Ascending aorta (tissue), 2 donors: ENCODE measurements at regions of chr9 and their contacts with region 1.

Region 1: GRCh38 chr9:98660541-98660940 is 48.2 kb downstream of the GABBR2 start:
- DNase-seq: no peak
- H3K4me3 ChIP-seq: no peak overlapping the region
- H3K27ac ChIP-seq: no peak overlapping the region
- H3K4me1 ChIP-seq: peaks cover 3 to 10% of the 10 kb centered on the region in 2 donors
- H3K27me3 ChIP-seq: no peaks in the 10 kb centered on the region
- CTCF ChIP-seq: no peak

Region 2: DNA sequence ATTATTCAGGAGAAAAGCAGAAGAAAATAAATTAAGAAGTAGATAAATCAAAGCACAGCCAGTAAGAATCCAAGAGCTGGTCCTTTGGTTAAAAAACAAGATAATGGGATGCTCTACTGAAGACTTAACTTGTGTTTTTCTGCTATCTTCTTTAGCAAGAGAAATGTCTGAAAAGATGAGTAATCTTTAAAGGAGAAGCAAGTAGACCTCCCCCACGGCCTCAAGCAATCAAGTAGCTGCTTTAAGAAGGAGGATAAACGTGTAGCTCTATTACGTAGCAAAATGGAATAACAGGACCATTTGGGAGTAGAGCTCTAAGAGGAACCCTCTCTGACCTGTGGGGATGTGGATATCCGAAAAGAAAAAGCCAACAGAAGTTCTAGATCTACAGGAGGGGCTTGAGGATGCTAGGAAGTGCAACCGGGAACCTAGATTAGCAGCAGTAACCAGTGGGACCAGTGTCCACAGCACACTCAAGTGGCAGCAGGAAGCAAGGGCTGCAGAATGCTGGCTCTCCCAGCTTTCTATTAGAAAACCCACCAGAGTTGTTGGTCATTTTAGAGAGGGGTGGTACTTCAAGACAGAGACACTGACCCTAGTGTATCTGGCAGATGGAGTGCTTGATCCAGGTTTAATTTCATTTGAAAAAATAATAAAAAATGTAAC is 137.2 kb before region 1 on chr9:
- intact Hi-C with region 1: no loop called
- DNase-seq: no peak
- H3K4me3 ChIP-seq: no peak overlapping the region
- H3K27ac ChIP-seq: no peak overlapping the region
- H3K4me1 ChIP-seq: no peaks in the 10 kb centered on the region
- H3K27me3 ChIP-seq: no peaks in the 10 kb centered on the region
- CTCF ChIP-seq: no peak

Region 3: DNA sequence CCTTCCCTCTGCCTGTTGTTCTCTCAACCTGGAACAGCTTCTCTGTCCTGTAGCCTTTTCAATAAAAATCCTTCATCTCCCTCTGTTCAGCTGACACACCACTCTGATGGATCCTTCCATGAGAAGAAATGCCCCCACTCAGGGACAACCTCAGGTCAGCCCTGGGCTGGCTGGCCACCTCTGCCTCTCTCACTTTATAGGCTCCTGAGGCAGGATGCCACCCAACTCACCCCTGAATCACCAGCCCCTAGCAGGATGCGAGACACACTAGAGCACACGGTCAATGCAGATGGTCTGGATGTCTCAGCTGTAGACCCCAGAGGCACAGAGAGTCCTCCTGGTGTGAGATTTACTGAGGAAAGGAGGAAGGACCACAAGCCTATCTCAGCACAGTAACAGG is 45.6 kb before region 1 on chr9:
- intact Hi-C with region 1: no loop called
- DNase-seq: peak in 1 of 2 donors; percentile 18
- H3K4me3 ChIP-seq: no peak overlapping the region
- H3K27ac ChIP-seq: no peak overlapping the region
- H3K4me1 ChIP-seq: no peaks in the 10 kb centered on the region
- H3K27me3 ChIP-seq: no peaks in the 10 kb centered on the region
- CTCF ChIP-seq: no peak

Region 4: DNA sequence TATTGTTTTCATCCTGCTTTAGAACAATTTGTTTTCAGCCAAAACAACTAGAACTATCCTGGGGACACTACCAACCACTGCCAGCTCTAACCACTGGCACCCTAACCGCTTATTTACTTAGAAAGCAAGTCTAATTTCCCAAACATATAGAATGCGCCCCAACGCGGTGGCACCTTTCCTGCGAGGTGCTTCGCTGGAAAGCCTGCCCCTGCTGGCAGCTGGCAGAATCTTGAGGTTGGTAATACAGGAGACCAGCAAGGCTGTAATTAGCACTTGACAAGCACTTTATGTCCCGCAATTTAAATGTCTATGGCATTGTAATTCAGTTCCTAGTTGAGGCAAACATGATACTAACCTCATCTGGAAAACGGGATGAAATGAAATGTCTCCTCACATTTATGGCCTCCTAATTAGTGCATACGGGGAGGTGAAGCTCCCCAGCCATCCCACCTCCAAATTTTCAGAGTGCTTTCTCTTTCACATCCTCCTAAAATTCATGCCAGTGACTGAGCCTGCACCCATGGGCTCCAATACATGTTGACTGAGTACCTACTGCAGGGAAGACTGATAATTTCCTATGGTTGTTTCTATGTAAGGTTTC is 17.8 kb after region 1 on chr9:
- intact Hi-C with region 1: no loop called
- DNase-seq: no peak
- H3K4me3 ChIP-seq: no peak overlapping the region
- H3K27ac ChIP-seq: no peak overlapping the region
- H3K4me1 ChIP-seq: no peaks in the 10 kb centered on the region
- H3K27me3 ChIP-seq: no peaks in the 10 kb centered on the region
- CTCF ChIP-seq: peak in 1 of 3 experiments; percentile 8

Region 5: GRCh38 chr9:98702835-98703380 is 42.4 kb after region 1 on chr9:
- intact Hi-C with region 1: no loop called
- DNase-seq: no peak
- H3K4me3 ChIP-seq: no peak overlapping the region
- H3K27ac ChIP-seq: no peak overlapping the region
- H3K4me1 ChIP-seq: no peaks in the 10 kb centered on the region
- H3K27me3 ChIP-seq: no peaks in the 10 kb centered on the region
- CTCF ChIP-seq: no peak

Region 6: DNA sequence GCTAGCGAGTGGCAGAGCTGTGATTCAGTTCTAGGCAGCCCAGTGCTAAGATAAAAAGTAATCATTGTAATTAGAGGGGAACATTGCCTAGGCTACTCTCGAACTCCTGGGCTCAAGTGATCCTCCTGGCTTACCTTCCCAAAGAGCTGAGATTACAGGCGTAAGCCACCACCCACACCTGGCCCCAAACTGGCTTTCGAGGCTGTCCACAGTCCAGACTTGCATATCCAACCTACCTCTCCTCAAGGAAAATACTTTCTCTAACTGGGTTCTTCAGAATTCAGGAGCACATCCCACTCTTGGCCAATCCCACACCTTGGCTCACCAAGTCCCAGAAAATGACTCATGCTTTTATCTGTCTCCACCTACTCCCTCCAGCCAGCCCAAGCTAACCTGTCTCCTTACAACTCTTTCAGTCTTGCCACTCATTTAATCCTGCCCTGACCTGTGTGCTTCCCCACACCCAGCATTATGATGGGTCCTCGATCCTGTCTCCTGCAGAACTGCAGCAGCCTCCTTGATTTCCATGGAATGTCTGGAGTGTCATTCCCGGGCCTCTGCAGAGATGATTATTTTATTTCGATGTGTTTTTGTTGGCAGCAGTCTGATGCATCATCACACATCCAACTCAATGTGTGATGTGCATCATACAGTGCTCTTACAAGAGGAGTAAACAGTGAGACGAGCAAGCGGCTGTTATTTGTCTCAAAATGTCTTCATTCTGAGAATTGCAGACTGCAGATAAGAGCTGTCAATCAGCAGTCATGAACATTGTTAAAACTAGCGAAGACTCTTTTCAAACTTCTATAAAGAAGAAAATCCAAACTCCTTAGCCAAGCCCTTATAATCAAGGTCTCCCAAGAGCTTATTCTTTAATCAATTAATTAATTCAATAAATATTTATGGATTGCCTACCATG is 728.8 kb after region 1 on chr9:
- intact Hi-C with region 1: loop called (anchors 10 kb)
- DNase-seq: no peak
- H3K4me3 ChIP-seq: no peak overlapping the region
- H3K27ac ChIP-seq: no peak overlapping the region
- H3K4me1 ChIP-seq: no peaks in the 10 kb centered on the region
- H3K27me3 ChIP-seq: no peaks in the 10 kb centered on the region
- CTCF ChIP-seq: no peak